Dorsolateral prefrontal cortex (tissue), 120 donors: ENCODE measurements at regions of chr11 and their contacts with region 1.

Region 1: GRCh38 chr11:2725368-2726300 is 25.8 kb upstream of the KCNQ1OT1 start:
- DNase-seq: no peak
- H3K4me3 ChIP-seq: no peak overlapping the region
- H3K27ac ChIP-seq: no peak overlapping the region
- H3K27me3 ChIP-seq: no peaks in the 10 kb centered on the region
- CTCF ChIP-seq: no peak

Region 2: DNA sequence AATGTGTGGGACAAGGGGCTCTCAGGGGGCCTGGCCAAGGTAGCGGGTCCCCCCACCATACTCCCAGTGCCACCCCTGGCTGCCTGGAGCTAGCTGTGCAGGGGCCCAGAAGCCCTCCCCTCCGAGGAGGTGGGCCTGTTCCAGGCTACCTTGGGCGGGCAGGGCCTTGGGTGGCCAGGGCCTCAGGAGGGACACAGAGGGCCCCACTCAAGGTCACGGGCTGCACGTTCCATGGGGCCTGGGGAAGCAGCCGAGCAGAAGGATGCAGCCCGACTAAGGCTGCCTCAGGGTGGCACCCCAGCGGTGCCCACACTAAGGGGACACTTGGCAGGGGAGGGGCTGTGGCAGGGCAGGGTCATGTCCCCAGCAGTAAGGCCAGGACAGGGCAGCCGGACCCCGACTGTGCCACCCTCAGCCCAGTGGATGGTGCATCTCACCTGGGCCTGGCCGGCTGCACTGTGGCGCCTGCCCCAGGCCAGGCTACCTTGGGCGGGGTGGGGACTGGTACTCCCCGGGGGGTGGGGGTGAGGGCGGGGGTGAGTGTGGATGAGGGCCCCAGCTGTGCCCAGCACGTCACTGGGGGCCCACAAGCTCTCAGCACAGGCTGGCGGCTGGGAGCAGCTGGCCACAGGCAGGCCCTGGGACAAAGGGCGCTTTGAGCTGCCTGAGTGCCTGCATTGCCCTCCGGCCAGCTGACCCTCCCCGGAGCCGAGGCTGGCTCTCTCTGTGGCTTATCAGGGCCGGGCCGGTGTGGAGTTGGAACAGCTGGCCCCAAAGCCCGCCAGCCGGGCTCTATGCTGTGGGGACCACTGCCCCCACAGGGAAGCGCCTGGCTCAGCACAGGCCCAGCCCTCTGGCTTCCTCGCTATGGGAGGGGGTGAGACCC is 163.7 kb before region 1 on chr11:
- intact Hi-C with region 1: loop called in 1 of 2 experiments (anchors 10 kb)
- DNase-seq: peak; percentile 20 to 95 (median 92)
- H3K4me3 ChIP-seq: no peak overlapping the region
- H3K27ac ChIP-seq: peak overlapping the region in 20 of 59 donors; percentile 10 to 76 (median 52)
- H3K27me3 ChIP-seq: peaks cover 0 to 3% (median 0%) of the 10 kb centered on the region in 45 donors
- CTCF ChIP-seq: peak in 10 of 56 donors; percentile 9 to 39 (median 29)

Region 3: DNA sequence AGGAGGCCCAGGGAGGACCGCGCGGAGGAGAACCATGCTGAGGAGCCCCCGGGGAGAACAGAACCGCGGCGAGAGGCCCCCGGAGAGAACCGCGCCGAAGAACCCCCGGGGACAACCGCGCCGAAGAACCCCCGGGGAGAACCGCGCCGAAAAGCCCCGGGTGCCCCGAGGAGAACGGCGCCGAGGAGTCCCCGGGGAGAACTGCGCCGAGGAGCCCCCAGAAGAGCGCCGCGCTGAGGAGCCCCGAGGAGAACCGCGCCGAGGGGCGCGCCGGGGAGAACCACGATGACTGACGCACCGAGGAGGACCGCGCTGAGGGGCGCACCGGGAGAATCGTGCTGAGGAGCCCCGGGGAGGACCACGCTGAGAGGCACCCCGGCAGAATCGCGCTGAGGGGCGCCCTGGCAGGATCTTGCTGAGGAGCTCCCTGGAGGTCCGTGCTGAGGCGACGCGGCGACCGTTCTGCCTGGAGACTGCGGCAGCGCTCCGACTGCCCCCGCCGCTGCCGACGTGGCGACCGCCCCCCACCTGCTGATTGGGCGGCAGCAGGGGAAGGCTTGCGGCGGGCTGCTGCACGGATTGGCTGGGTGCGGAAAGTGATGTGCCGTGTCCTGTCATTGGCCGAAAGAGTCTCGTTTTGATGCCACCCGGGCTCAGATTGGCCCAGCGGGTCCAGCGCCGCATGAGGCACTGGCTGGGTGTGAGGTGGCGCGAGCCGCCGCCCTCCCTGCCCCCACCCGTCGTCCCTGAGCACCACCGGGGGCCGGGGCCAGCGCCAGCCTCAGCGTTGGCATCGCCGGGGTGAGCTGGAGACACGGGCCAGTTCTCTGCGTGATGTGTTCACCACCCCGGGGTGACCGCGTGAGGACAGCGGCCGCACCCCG is 25.9 kb before region 1 on chr11 and contains the start of gene KCNQ1OT1:
- intact Hi-C with region 1: loop called in 1 of 2 experiments (anchors 2 kb)
- DNase-seq: peak; percentile 80 to 94 (median 92)
- H3K4me3 ChIP-seq: peak within 1 kb of the TSS; percentile 34 to 80 (median 69)
- H3K27ac ChIP-seq: peak within 1 kb of the TSS in 58 of 59 donors; percentile 43 to 96 (median 92)
- H3K27me3 ChIP-seq: no peaks in the 10 kb centered on the region
- CTCF ChIP-seq: peak in 11 of 56 donors; percentile 6 to 31 (median 22)
- total RNA-seq, gene KCNQ1OT1: 2.4 to 9.8 (median 4.7) TPM

Region 4: GRCh38 chr11:2807025-2807681 is 81.5 kb after region 1 on chr11:
- intact Hi-C with region 1: loop called in 1 of 2 experiments (anchors 2 kb)
- DNase-seq: peak in 9 of 10 donors; percentile 41 to 85 (median 58)
- H3K4me3 ChIP-seq: peak overlapping the region in 25 of 59 donors; percentile 2 to 45 (median 19)
- H3K27ac ChIP-seq: peak overlapping the region in 18 of 59 donors; percentile 2 to 64 (median 37)
- H3K27me3 ChIP-seq: peaks cover 0 to 16% (median 0%) of the 10 kb centered on the region in 45 donors
- CTCF ChIP-seq: peak in 2 of 56 donors; percentile 8 to 13

Region 5: DNA sequence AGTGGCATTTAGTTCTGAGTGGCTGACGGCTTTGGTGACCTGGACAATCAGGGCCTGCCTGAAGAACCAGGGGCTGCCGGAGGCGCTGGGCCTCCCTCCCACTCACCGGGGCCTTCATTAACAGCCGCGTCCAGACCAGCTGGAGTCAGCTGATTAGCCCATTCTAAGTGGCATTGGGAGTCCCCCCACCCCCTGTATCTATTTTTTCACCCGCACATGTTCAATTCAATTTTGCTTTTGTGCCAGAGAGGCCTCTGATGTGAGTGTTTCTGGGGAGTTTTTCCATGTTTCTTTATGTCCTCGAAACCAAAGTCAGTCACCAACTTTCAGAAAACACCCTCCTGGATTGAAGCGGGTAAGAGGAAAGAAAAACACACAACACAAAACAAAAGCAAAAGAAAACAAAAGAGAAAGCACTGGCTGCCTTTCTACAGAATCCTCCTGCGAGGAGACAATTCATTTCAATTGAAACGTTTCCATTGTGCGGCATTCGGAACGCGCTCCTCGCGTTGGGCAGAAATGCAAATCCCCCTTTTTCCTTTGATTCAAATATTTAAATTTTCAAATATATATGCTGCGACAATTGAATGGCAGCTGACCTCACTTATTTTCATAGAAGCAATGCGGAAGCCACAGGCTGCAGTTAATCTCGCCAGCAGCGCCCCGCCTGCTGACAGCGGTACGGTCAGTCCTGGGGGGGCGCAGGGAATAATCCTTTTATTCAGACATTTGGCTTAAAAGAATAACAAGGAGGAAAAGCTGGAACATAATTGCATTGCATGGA is 142.3 kb after region 1 on chr11:
- intact Hi-C with region 1: loop called (anchors 1 to 2 kb)
- DNase-seq: peak in 2 of 10 donors; percentile 51 to 53
- H3K4me3 ChIP-seq: peak overlapping the region in 54 of 59 donors; percentile 0 to 61 (median 36)
- H3K27ac ChIP-seq: peak overlapping the region; percentile 9 to 98 (median 93)
- H3K27me3 ChIP-seq: peaks cover 0 to 51% (median 20%) of the 10 kb centered on the region in 45 donors
- CTCF ChIP-seq: peak in 25 of 56 donors; percentile 10 to 55 (median 24)

Region 6: DNA sequence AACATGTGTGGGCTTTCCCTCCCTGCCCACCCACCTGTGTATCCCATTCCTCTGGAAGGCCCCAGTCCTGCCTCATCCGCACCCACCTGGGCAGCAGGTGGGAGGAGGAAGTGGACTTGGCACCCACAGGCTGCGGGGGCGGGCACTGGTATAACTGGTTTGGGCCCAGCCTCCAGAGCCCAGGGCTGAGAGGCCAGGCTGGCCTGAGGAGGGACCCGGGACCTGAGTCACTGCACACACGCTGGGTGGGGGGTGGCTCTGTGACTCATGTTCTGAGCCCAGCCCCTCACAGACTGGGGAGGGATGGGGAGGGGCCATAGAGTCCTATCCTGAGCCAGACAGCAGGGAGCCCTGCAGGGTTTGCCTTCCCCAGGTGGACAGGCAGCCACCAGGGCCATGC is 186.9 kb after region 1 on chr11:
- intact Hi-C with region 1: no loop called
- DNase-seq: no peak
- H3K4me3 ChIP-seq: no peak overlapping the region
- H3K27ac ChIP-seq: no peak overlapping the region
- H3K27me3 ChIP-seq: peaks cover 0 to 26% (median 17%) of the 10 kb centered on the region in 45 donors
- CTCF ChIP-seq: no peak